Body of pancreas (tissue), 4 donors: ENCODE measurements at regions of chr7 and their contacts with region 1.

Region 1: DNA sequence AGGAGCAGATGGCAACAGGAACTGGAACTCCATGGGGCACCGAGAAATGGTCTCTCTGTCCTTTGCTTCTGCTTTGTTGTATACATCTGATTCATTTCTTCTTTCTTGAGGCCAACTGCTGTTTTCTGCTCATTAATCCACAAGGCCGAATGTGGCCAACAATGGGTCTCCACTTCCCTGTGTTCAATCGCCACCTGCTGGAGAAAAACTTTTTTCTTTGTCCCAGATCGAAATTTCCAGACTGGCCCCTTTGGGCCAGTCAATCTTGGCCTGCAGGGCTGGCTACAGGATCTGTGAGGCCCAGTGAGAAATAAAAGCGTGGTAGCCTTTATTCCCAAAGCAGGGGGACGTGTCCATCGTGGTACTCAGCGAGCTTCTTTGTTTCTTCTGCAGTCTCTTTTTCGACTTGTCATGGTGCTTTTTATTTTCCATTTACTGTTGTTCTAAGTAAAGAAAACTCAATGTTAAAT is 58.8 kb downstream of the PARP12 start:
- DNase-seq: peak in 3 of 4 donors; percentile 31 to 34 (median 32)
- ATAC-seq: no peak
- H3K4me3 ChIP-seq: no peak overlapping the region
- H3K27ac ChIP-seq: no peak overlapping the region
- H3K4me1 ChIP-seq: peaks cover 8% of the 10 kb centered on the region
- H3K27me3 ChIP-seq: no peaks in the 10 kb centered on the region
- CTCF ChIP-seq: peak in 6 of 7 experiments; percentile 16 to 47 (median 43)
- POLR2A ChIP-seq: no peak

Region 2: DNA sequence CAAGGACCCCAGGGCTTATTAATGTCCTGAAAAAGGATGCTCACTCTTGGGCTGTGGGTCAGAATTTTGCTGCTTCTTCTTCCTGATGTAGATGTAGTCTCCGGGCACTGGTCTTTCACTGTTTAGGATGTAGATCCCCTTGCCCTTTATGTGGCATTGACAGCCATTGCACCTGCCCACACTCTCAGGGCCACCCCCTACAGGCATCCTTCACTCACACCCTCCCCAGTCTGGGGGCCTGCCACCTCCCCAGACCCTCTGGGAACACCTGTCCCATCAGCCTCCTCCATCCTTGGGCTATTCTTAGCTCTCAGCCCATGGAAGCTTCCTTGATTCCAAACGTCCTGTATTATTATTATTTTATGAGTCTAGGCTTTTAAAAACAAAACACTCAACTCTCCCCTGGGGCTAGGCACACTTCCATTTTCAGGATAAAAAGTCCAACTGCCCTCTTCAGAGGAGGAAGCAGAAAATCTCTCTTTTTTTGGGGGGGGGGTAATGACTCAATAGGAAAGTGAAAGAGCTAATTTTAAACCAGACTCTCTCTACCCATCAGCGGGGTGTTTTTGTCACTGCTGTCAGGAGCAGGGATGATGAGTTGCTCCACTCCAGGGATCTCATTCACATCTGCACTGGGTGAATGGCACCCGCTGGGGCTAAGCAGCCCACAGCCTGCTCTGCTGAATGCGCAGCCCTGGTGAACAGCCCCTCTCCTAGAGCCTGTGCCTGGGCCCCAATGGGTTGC is 508.9 kb before region 1 on chr7:
- intact Hi-C with region 1: loop called (anchors 10 kb)
- DNase-seq: no peak
- ATAC-seq: no peak
- H3K4me3 ChIP-seq: no peak overlapping the region
- H3K27ac ChIP-seq: no peak overlapping the region
- H3K4me1 ChIP-seq: peaks cover 11% of the 10 kb centered on the region
- H3K27me3 ChIP-seq: no peaks in the 10 kb centered on the region
- CTCF ChIP-seq: no peak
- POLR2A ChIP-seq: no peak

Region 3: GRCh38 chr7:139645572-139646523 is 358.1 kb before region 1 on chr7:
- intact Hi-C with region 1: loop called (anchors 5 kb)
- DNase-seq: peak; percentile 88 to 89 (median 88)
- ATAC-seq: peak; percentile 81
- H3K4me3 ChIP-seq: no peak overlapping the region
- H3K27ac ChIP-seq: no peak overlapping the region
- H3K4me1 ChIP-seq: peaks cover 38% of the 10 kb centered on the region
- H3K27me3 ChIP-seq: no peaks in the 10 kb centered on the region
- CTCF ChIP-seq: peak; percentile 85 to 93 (median 91)
- POLR2A ChIP-seq: no peak

Region 4: DNA sequence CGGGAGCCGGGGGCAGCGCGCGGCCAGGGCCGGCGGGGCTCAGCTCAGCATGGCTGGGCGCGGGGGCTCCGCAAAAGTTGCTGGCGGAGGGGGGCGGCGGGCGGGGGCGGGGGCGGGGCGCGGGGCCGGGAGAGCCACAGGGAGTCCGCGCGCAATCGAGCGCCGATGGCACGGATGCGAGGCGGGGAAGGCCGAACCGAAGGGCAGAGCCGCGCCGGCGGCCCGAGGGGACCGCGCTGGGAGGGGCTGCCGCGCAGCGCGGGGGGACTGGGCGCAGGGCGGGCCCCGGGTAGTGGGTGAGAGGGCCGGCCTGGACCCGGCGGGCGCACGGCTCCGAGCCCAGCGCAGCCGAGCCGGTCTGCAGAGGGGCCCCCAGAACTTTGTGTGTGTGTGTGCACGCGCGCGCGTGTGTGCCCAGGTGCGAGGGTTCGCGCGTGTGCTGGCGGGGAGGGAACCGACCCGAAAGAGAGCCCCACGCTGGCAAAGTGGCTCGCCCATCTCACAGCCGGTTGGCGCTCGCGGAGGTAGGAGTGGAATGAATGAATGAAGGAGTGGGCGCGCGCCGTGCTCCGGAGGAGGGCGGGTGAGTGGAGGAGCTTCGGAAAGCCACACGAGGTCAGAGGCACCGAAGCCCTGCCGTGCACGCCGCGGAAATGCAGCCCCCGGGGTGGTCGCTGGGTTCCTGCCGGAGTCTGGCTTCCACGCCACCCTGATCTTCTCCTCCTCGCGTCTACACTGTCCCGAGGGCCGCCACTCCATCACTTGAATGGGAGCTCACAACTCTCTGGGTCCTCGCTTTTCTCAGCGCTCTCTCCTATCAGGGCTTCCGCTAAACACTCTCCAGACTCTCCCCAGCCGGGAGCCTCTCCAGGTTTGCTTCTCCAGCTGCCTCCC is 225.8 kb before region 1 on chr7 and contains the start of gene HIPK2:
- intact Hi-C with region 1: loop called (anchors 5 kb)
- DNase-seq: peak; percentile 73 to 87 (median 78)
- ATAC-seq: peak; percentile 79
- H3K4me3 ChIP-seq: peak within 1 kb of the TSS; percentile 65 to 71
- H3K27ac ChIP-seq: peak within 1 kb of the TSS; percentile 90 to 97 (median 94)
- H3K4me1 ChIP-seq: peaks cover 30% of the 10 kb centered on the region
- H3K27me3 ChIP-seq: no peaks in the 10 kb centered on the region
- CTCF ChIP-seq: no peak
- POLR2A ChIP-seq: no peak
- total RNA-seq, gene HIPK2: 22.1 to 26.4 TPM